ENCODE measurements at regions of chr1 and their contacts with region 1.

Region 1: DNA sequence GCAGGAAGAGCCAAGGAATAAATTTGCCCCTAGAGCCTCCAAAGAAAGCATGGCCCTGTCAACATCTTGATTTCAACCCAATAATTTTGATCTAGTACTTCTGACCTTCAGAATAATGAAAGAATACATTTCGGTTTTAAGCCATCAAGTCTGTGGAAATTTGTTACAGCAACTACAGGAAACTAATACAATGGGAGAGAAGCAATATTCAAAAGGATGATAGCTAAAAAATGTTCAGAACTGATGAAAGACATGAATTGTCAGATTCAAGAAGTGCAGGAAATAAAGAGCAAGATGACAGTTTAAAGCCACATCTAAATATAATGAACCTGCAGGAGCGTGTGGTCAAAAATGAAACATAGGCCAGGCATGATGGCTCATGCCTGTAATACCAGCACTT is 24.8 kb upstream of the IFFO2 start:
- DNase-seq: no peak
- H3K4me3 ChIP-seq: no peak overlapping the region
- H3K27ac ChIP-seq: no peak overlapping the region
- H3K4me1 ChIP-seq: no peaks in the 10 kb centered on the region
- H3K27me3 ChIP-seq: no peaks in the 10 kb centered on the region
- CTCF ChIP-seq: no peak
- POLR2A ChIP-seq: no peak

Region 2: DNA sequence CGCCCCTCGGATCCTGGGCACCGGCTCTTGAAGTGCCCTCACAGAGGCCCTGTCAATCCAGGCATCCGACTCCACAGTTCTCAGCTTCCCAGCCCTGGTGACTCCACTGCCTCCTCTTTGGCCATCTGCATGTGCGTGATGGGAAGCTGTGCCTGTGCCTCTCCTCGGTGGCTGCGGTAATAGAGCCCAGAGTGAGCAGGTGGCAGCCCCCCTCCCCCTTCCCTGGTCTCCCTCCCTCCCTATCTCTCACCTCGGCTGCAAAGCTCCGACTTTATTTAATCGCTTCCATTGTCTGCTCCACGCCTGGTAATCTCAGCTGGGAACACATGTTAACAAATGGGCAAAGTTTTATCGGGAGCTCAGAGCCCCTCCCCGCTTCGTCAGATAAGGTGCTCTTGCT is 781.8 kb before region 1 on chr1:
- intact Hi-C with region 1: loop called (anchors 5 kb)
- DNase-seq: no peak
- H3K4me3 ChIP-seq: no peak overlapping the region
- H3K27ac ChIP-seq: no peak overlapping the region
- H3K4me1 ChIP-seq: no peaks in the 10 kb centered on the region
- H3K27me3 ChIP-seq: no peaks in the 10 kb centered on the region
- CTCF ChIP-seq: no peak
- POLR2A ChIP-seq: no peak

Region 3: GRCh38 chr1:19010995-19011844 is 30.0 kb after region 1 on chr1:
- intact Hi-C with region 1: no loop called
- DNase-seq: peak; percentile 96 to 97
- H3K4me3 ChIP-seq: no peak overlapping the region
- H3K27ac ChIP-seq: peak overlapping the region; percentile 92
- H3K4me1 ChIP-seq: peaks cover 27% of the 10 kb centered on the region
- H3K27me3 ChIP-seq: no peaks in the 10 kb centered on the region
- CTCF ChIP-seq: no peak
- POLR2A ChIP-seq: no peak